ENCODE measurements at regions of chr12 and their contacts with region 1.

Region 1: DNA sequence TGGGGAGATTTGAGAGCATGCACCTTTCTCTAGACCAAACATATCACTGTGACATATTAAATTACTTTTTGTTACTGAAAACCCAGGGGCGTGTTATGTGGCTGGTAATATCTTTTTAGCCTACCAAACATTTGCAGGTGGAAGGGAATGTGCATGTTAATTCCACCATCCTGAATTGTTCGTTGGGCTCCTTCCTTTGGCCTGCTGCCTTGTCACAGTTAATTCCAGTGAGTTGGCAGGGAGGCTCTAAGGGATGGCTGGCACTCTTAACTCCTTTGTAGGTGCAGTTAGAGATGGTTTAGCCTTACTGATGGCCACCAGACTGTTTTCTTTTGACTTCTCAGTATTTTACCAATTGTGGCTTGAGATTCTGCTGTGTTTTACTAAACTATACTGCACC is 64.5 kb downstream of the DIP2B start:
- DNase-seq: no peak
- ATAC-seq: no peak
- H3K4me3 ChIP-seq: no peak overlapping the region
- H3K27ac ChIP-seq: peak overlapping the region in 1 of 4 donors; percentile 58
- H3K4me1 ChIP-seq: peaks cover 71% of the 10 kb centered on the region
- H3K27me3 ChIP-seq: no peaks in the 10 kb centered on the region
- CTCF ChIP-seq: no peak
- POLR2A ChIP-seq: no peak

Region 2: DNA sequence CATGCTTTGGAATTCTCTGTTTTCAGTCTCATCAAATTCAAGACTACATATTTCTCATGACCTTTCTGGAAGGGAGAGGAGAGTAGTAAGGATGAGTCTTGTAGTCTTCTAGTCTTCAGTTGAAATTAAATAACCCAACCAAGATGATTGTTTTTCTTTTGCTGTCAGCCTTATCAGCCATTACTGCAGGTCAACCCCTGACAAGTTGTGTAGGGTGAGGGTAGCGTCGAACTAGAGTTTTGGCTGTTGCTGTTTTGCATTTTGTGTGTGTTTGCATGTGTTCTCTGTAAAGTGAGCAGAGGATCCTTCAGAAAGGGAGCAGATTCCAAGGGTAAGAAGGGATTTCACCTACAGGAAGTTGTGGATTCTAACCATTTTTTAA is 36.1 kb before region 1 on chr12:
- intact Hi-C with region 1: no loop called
- DNase-seq: no peak
- ATAC-seq: peak; percentile 2
- H3K4me3 ChIP-seq: no peak overlapping the region
- H3K27ac ChIP-seq: peak overlapping the region; percentile 42 to 91 (median 76)
- H3K4me1 ChIP-seq: peaks cover 56% of the 10 kb centered on the region
- H3K27me3 ChIP-seq: no peaks in the 10 kb centered on the region
- CTCF ChIP-seq: no peak
- POLR2A ChIP-seq: no peak

Region 3: GRCh38 chr12:50620109-50620977 is 51.0 kb after region 1 on chr12:
- intact Hi-C with region 1: loop called (anchors 10 kb)
- DNase-seq: peak in 1 of 4 donors; percentile 15
- ATAC-seq: peak; percentile 39
- H3K4me3 ChIP-seq: no peak overlapping the region
- H3K27ac ChIP-seq: peak overlapping the region in 1 of 4 donors; percentile 55
- H3K4me1 ChIP-seq: peaks cover 32% of the 10 kb centered on the region
- H3K27me3 ChIP-seq: no peaks in the 10 kb centered on the region
- CTCF ChIP-seq: no peak
- POLR2A ChIP-seq: no peak